ENCODE measurements at regions of chr19 and their contacts with region 1.

Region 1: DNA sequence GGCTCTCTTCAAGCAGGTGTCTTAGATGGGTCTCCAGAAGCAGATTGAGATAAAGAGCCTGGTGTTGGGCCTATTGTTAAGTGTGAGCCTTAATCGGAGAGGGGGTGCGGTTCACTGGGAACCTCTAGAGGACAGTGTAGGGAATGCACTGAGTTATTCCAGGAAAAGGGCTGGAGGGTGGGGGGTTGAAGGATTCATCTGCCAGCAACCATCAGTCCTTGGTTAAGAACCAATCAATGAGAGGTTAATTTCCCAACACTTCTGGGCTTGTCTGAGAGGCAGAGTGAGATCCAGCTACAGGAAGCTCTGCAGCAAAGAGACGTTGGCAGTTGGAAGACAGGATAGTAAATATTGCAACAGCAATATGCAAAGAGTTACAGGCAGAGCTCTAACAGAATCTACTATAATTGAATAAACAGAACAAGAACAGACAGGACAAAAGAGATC is 28.7 kb downstream of the CYP4F2 start:
- DNase-seq: no peak
- H3K4me3 ChIP-seq: no peak overlapping the region
- H3K27ac ChIP-seq: no peak overlapping the region
- H3K4me1 ChIP-seq: peaks cover 0 to 32% (median 4%) of the 10 kb centered on the region in 6 donors
- H3K27me3 ChIP-seq: peaks cover 0 to 37% (median 0%) of the 10 kb centered on the region in 7 donors
- CTCF ChIP-seq: peak in 9 of 11 experiments; percentile 28 to 61 (median 56)
- POLR2A ChIP-seq: no peak

Region 2: GRCh38 chr19:15629003-15629880 is 239.9 kb before region 1 on chr19:
- intact Hi-C with region 1: loop called (anchors 5 kb)
- DNase-seq: peak; percentile 97
- H3K4me3 ChIP-seq: peak overlapping the region in 1 of 8 donors; percentile 30
- H3K27ac ChIP-seq: peak overlapping the region in 1 of 8 donors; percentile 23
- H3K4me1 ChIP-seq: peaks cover 0 to 38% (median 9%) of the 10 kb centered on the region in 6 donors
- H3K27me3 ChIP-seq: peaks cover 0 to 29% (median 6%) of the 10 kb centered on the region in 7 donors
- CTCF ChIP-seq: peak; percentile 73 to 96 (median 94)
- POLR2A ChIP-seq: no peak

Region 3: GRCh38 chr19:15815306-15815705 is 53.8 kb before region 1 on chr19 and contains the start of gene OR10H1:
- intact Hi-C with region 1: no loop called
- DNase-seq: no peak
- H3K4me3 ChIP-seq: no peak within 1 kb of the TSS
- H3K27ac ChIP-seq: no peak within 1 kb of the TSS
- H3K4me1 ChIP-seq: no peaks in the 10 kb centered on the region
- H3K27me3 ChIP-seq: peaks cover 0 to 51% (median 0%) of the 10 kb centered on the region in 7 donors
- CTCF ChIP-seq: no peak
- POLR2A ChIP-seq: no peak
- total RNA-seq, gene OR10H1: not detected

Region 4: GRCh38 chr19:15828429-15829305 is 40.5 kb before region 1 on chr19:
- intact Hi-C with region 1: no loop called
- DNase-seq: no peak
- H3K4me3 ChIP-seq: no peak overlapping the region
- H3K27ac ChIP-seq: no peak overlapping the region
- H3K4me1 ChIP-seq: no peaks in the 10 kb centered on the region
- H3K27me3 ChIP-seq: peaks cover 0 to 17% (median 0%) of the 10 kb centered on the region in 7 donors
- CTCF ChIP-seq: no peak
- POLR2A ChIP-seq: no peak

Region 5: GRCh38 chr19:16001481-16002312 is 132.6 kb after region 1 on chr19:
- intact Hi-C with region 1: no loop called
- DNase-seq: no peak
- H3K4me3 ChIP-seq: peak overlapping the region in 6 of 8 donors; percentile 10 to 58 (median 20)
- H3K27ac ChIP-seq: peak overlapping the region in 6 of 8 donors; percentile 9 to 63 (median 57)
- H3K4me1 ChIP-seq: peaks cover 4 to 28% (median 17%) of the 10 kb centered on the region in 6 donors
- H3K27me3 ChIP-seq: no peaks in the 10 kb centered on the region
- CTCF ChIP-seq: no peak
- POLR2A ChIP-seq: no peak

Measured in spleen (tissue), 13 donors.